ENCODE measurements at regions of chr6 and their contacts with region 1.

Region 1: GRCh38 chr6:135974426-135974825 is 122.9 kb downstream of the PDE7B start:
- DNase-seq: no peak
- H3K4me3 ChIP-seq: no peak overlapping the region
- H3K27ac ChIP-seq: no peak overlapping the region
- H3K4me1 ChIP-seq: no peaks in the 10 kb centered on the region
- H3K27me3 ChIP-seq: no peaks in the 10 kb centered on the region
- CTCF ChIP-seq: no peak
- EP300 ChIP-seq: no peak
- POLR2A ChIP-seq: no peak

Region 2: GRCh38 chr6:134994431-134994830 is 980.0 kb before region 1 on chr6:
- in situ Hi-C with region 1: no loop called
- intact Hi-C with region 1: loop called (anchors 5 kb)
- DNase-seq: no peak
- H3K4me3 ChIP-seq: no peak overlapping the region
- H3K27ac ChIP-seq: no peak overlapping the region
- H3K4me1 ChIP-seq: peaks cover 0 to 8% (median 3%) of the 10 kb centered on the region in 4 donors
- H3K27me3 ChIP-seq: no peaks in the 10 kb centered on the region
- CTCF ChIP-seq: no peak
- EP300 ChIP-seq: no peak
- POLR2A ChIP-seq: no peak

Region 3: GRCh38 chr6:135932644-135933043 is 41.8 kb before region 1 on chr6:
- in situ Hi-C with region 1: no loop called
- intact Hi-C with region 1: no loop called
- DNase-seq: no peak
- H3K4me3 ChIP-seq: no peak overlapping the region
- H3K27ac ChIP-seq: no peak overlapping the region
- H3K4me1 ChIP-seq: no peaks in the 10 kb centered on the region
- H3K27me3 ChIP-seq: no peaks in the 10 kb centered on the region
- CTCF ChIP-seq: no peak
- EP300 ChIP-seq: no peak
- POLR2A ChIP-seq: no peak